ENCODE measurements at regions of chr10 and their contacts with region 1.

Region 1: DNA sequence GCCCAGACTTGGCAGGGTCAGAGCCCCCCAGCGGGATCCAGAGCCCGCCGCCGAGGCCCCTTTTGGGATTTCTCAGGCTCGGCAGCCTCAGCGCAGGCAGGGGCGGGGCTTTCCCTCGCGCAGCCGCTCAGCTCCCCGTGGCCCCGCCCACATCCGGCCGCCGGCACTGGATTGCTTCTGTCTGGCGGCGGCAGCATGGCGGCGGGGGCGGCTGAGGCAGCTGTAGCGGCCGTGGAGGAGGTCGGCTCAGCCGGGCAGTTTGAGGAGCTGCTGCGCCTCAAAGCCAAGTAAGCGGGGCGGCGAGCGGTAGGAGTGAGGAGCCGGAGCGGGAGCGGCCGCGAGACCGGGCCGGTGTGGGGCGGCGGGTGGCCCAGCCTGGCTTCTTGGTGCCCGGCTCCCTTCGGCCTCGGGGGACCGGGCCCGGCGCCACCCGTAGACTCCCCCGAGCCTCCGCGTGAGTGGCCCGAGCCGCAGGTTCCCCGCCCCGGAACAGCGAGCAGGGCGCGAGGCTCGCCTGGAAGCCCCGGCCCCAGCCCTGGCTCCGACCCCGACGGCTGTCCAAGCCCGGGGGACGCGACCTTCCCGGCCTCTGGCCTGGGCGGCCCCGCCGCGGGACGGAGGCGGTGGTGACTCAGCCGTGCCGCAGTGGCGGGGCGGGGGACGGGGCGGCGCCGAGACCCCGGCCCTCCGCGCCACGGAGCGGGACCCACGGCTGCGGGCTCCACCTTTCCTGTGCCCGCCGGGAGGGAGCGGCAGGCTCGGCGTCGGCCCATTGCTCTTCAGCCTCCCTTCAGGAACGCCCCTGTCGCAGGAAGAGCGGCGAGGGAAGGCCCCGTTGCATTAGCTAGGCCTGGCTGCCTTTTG is at the start of gene GLRX3:
- DNase-seq: peak; percentile 93
- ATAC-seq: peak; percentile 98
- total RNA-seq, gene GLRX3: 53.5 to 67.1 TPM

Region 2: DNA sequence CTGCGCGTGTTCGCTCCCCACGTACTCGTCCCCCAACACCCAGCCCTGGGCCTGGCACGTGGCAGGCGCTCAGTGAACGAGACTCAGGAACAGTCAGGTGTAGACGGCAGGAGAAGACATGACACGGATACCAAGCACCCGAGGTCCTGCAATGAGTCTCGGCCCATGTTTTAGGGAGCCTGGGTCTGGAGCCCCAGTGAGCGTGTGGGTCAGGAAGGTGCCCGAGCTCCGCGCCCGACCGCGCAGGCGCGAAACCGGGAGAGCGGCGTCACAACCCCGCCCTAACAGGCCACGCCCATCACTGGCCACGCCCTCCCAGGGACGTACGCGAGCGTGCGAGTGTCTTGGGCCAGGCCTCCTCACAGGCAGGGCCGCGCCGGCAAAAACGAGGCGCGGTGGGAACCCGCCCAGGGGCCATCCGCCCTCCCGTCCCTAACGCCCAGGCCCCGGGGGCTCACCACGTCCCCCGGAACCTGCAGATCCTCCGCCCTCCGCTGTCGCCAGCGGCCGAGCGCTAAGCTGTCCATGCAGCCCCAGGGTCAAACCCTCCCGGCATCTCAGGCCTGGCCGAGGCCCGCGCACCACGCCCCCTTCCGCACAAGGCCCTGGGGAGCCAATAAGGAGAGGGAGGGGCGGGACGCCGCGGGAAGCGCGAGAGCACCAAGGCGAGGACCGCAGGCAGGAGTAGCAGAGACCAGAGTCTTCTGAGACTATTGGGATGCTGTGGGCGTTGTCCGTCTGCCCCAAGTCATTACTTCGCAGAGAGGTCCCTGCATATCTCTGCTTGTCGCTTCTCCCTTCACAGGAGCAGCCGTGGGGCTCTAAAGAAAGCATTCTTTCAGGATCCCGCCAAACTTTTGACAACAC is 26.0 kb before region 1 on chr10 and contains the start of gene C10orf143:
- intact Hi-C with region 1: loop called in 1 of 2 experiments (anchors 1 kb)
- DNase-seq: peak; percentile 99
- ATAC-seq: peak; percentile 96 to 97
- total RNA-seq, gene C10orf143: 2.1 to 2.3 TPM